ENCODE measurements at regions of chr6 and their contacts with region 1.

Region 1: GRCh38 chr6:28252009-28252975 is at the start of gene ZKSCAN4:
- DNase-seq: peak; percentile 86
- H3K4me3 ChIP-seq: peak within 1 kb of the TSS; percentile 94
- H3K27ac ChIP-seq: peak within 1 kb of the TSS; percentile 52
- H3K27me3 ChIP-seq: no peaks in the 10 kb centered on the region
- CTCF ChIP-seq: no peak
- polyA plus RNA-seq, gene ZKSCAN4: 3.7 and 4.7 TPM in 2 replicates

Region 2: GRCh38 chr6:28266962-28267694 is 14.8 kb after region 1 on chr6 and contains the start of gene ZSCAN26:
- CTCF ChIA-PET with region 1: interaction called, 3 read pairs
- POLR2A ChIA-PET with region 1: interaction called, 14 read pairs
- DNase-seq: peak; percentile 82
- H3K4me3 ChIP-seq: peak within 1 kb of the TSS; percentile 75
- H3K27ac ChIP-seq: peak within 1 kb of the TSS; percentile 88
- H3K27me3 ChIP-seq: no peaks in the 10 kb centered on the region
- CTCF ChIP-seq: no peak
- polyA plus RNA-seq, gene ZSCAN26: 17.9 and 24.0 TPM in 2 replicates

Region 3: GRCh38 chr6:28371706-28372451 is 119.6 kb after region 1 on chr6:
- CTCF ChIA-PET with region 1: no interaction called
- POLR2A ChIA-PET with region 1: interaction called, 12 read pairs
- DNase-seq: no peak
- H3K4me3 ChIP-seq: no peak overlapping the region
- H3K27ac ChIP-seq: no peak overlapping the region
- H3K27me3 ChIP-seq: no peaks in the 10 kb centered on the region
- CTCF ChIP-seq: no peak

Region 4: DNA sequence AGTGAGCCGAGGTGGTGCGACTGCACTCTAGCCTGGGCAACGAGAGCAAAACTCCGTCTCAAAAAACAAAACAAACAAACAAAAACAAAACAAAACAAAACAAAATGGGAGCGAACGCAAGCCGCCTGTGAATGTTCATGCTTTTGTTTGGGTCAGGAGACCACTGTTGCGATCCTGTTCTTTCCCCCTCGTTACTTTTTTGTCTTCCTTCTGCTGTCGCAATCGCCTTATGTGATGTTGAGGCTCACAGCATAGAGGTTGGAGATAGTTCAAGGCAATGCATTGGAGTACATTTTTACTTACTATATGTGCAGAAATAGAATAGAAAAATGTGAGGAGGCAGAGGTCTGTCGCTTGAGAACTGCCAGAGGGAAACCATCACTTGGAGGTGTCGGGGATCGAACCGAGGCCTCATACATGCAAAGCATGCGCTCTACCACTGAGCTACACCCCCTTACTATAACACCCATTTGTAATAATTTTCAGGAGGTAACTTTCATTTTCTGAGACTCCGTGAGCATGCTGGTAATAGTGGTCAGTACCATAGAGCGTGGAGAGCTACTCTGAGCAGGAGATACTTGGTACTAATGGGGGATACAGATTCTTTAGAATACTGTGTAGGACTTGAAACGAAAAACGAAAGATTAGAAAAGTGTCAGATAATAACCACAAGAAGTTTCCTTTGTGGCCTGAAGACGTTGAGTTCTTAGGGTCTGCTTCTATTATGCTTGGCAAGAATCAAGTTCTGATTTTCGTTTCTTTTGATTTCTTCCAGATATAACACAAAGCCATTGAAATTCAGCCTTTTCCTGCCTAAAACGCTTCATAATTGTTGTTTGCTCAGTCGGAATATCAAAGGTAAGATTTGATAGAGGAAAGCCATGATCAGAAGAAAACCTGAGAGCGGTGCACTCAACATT is 550.4 kb after region 1 on chr6:
- CTCF ChIA-PET with region 1: no interaction called
- POLR2A ChIA-PET with region 1: no interaction called
- DNase-seq: no peak
- H3K4me3 ChIP-seq: no peak overlapping the region
- H3K27ac ChIP-seq: no peak overlapping the region
- H3K27me3 ChIP-seq: peaks cover 2% of the 10 kb centered on the region
- CTCF ChIP-seq: no peak

Measured in AG04450 (cell line).